GM10248 (cell line): ENCODE measurements at regions of chr1 and their contacts with region 1.

Region 1: DNA sequence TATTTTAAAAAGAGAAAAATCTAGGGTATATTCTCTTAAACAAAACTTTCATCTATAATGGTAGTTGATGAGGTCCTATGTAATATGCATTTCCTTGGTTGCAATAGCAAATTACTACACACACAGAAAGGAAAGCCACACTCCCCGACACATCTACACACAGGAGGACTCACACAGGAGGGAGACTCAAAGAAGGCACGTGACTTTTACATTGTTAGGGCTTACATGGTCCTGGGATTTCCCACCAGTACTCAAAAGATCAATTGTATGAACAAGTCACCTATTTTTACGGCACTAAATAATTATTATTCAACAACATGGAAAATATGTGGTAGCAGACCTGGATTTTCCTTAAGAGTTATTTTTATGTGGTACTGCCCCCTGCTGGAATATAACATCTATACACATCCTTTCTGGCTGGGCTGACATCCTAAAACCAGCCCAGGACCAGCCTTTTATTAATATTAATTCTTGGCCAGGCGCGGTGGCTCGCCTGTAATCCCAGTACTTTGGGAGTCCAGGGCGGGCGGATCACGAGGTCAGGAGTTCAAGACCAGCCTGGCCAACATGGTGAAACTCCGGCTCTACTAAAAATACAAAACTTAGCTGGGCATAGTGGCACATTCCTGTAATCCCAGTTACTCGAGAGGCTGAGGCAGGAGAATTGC is 33.9 kb upstream of the LGALS8 start:
- DNase-seq: peak; percentile 64
- CTCF ChIP-seq: peak; percentile 54

Region 2: DNA sequence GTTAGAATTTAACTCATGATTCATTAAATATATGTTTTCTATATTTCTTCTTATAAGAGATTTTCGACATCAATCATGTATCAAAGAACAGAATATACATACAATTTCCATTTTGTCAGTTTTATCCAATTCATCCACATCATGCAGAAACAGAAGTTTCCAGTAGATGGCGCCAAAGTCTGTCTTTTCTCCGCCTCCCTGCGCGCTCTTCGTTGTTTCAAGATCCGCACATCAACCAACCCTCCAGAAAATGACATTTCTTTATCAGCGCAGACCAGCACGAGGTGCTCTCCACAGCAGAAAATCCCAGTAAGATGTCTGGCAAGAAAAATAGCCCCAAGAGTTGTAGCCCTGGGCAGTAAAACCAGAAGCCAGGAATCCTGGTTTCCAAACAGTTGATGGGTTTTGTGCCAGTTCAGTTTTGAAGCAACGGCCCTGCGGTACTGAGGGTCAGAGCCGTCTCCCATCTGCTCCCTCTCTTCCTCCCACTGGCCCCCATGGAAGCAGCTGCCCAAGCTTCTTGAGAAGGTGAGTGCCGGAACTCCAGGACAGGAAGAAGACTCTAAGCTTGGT is 386.1 kb before region 1 on chr1:
- CTCF ChIA-PET with region 1: interaction called, 12 read pairs
- POLR2A ChIA-PET with region 1: no interaction called
- DNase-seq: peak; percentile 78
- CTCF ChIP-seq: peak; percentile 70

Region 3: GRCh38 chr1:236113324-236114032 is 376.4 kb before region 1 on chr1:
- CTCF ChIA-PET with region 1: interaction called, 34 read pairs
- POLR2A ChIA-PET with region 1: no interaction called
- DNase-seq: no peak
- CTCF ChIP-seq: no peak

Region 4: GRCh38 chr1:236472850-236473788 is 16.7 kb before region 1 on chr1:
- CTCF ChIA-PET with region 1: interaction called, 10 read pairs
- POLR2A ChIA-PET with region 1: no interaction called
- DNase-seq: no peak
- CTCF ChIP-seq: no peak

Region 5: DNA sequence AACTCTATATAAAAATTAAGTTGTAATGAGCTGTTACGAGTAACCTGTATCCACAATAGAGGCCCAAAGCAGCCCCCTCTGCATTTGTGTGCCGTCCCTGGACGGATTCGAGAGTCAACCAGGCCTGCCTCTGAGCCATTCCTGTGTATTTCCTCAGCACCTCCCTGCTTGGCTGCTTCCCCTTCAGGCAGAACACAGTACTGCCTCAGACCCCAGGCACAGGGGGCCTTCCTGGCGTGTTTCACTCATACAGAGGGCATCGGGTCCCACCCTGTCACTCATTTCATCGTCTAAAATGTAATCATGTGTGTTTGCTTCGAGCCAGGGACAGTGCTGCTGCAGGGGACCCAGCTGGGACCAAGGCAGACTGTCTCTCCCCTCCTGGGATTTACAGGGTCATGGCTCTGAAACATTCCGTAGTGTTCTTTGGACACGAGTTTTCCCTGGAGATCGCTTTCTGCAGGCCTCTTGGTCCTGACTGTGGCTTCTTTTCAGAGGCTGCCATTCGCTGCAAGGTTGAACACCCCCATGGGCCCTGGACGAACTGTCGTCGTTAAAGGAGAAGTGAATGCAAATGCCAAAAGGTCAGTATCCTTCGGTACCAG is 53.3 kb after region 1 on chr1:
- CTCF ChIA-PET with region 1: no interaction called
- POLR2A ChIA-PET with region 1: no interaction called
- DNase-seq: no peak
- CTCF ChIP-seq: no peak